ENCODE measurements at regions of chr10 and their contacts with region 1.

Region 1: GRCh38 chr10:7417103-7417623 is 6.3 kb upstream of the SFMBT2 start:
- DNase-seq: no peak
- ATAC-seq: no peak
- H3K4me3 Mint-ChIP-seq: no peak overlapping the region
- H3K27ac Mint-ChIP-seq: no peak overlapping the region
- H3K4me1 Mint-ChIP-seq: peaks cover 6% of the 10 kb centered on the region
- H3K27me3 Mint-ChIP-seq: peaks cover 5% of the 10 kb centered on the region
- CTCF ChIP-seq: no peak

Region 2: DNA sequence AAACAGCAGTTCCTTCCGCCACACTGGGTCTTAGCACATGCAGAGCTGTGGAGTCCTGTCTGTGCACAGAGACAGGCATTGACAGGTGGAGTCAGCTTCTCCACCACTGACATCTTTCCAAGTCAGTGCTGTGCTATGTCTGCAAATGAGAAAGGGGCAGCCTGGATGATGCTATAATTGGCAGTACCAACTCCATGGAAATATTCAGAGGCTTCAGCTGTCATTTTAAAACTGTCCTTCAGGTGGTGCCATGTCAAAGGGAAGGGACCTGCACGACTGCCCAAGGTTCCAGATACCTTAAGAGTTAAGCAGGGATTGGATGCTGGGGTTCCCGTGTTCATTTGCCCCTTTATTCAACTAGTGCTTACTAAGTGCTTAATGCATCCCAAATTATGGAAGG is 579.0 kb before region 1 on chr10:
- CTCF ChIA-PET with region 1: interaction called, 3 read pairs
- POLR2A ChIA-PET with region 1: no interaction called
- intact Hi-C with region 1: loop called (anchors 1 kb)
- DNase-seq: no peak
- ATAC-seq: no peak
- H3K4me3 Mint-ChIP-seq: no peak overlapping the region
- H3K27ac Mint-ChIP-seq: no peak overlapping the region
- H3K4me1 Mint-ChIP-seq: no peaks in the 10 kb centered on the region
- H3K27me3 Mint-ChIP-seq: peaks cover 9% of the 10 kb centered on the region
- CTCF ChIP-seq: no peak

Region 3: GRCh38 chr10:6843481-6843881 is 573.7 kb before region 1 on chr10:
- CTCF ChIA-PET with region 1: interaction called, 3 read pairs
- POLR2A ChIA-PET with region 1: no interaction called
- intact Hi-C with region 1: loop called (anchors 1 kb)
- DNase-seq: no peak
- ATAC-seq: no peak
- H3K4me3 Mint-ChIP-seq: no peak overlapping the region
- H3K27ac Mint-ChIP-seq: no peak overlapping the region
- H3K4me1 Mint-ChIP-seq: no peaks in the 10 kb centered on the region
- H3K27me3 Mint-ChIP-seq: peaks cover 11% of the 10 kb centered on the region
- CTCF ChIP-seq: no peak

Region 4: DNA sequence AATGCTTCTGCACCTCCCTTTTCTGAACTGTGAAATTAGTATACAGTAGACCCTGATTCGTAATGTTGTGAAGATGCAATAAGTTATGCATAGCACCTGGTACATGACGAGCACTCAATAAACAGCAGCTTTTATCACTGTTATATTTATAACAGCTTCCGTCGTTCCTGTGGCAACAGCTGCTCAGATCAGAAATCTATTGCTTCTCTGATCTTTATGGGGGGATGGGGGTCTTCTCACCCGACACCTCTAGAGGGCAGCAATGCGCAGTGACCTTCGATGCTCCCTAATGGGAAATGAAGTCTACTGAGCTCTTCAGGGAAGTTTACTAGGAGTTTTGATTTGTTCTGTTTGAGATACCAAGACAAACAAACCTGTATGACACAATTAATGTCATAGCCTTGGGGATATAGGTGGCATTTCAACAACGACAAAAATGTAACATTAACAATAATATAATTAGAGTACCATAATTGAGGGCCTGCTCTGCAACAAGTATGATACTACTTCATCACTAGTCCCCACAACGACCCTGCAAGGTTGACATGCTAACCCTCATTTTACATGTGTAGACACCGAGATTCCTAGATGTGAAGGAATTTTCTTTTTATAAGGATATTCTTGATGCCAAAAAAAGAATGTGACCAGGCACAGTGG is 295.9 kb before region 1 on chr10:
- CTCF ChIA-PET with region 1: interaction called, 26 read pairs
- POLR2A ChIA-PET with region 1: no interaction called
- intact Hi-C with region 1: loop called (anchors 1 kb)
- DNase-seq: peak; percentile 43
- ATAC-seq: peak; percentile 85
- H3K4me3 Mint-ChIP-seq: no peak overlapping the region
- H3K27ac Mint-ChIP-seq: no peak overlapping the region
- H3K4me1 Mint-ChIP-seq: peaks cover 6% of the 10 kb centered on the region
- H3K27me3 Mint-ChIP-seq: peaks cover 3% of the 10 kb centered on the region
- CTCF ChIP-seq: peak; percentile 42

Region 5: GRCh38 chr10:7374795-7375194 is 42.4 kb before region 1 on chr10:
- CTCF ChIA-PET with region 1: no interaction called
- POLR2A ChIA-PET with region 1: no interaction called
- intact Hi-C with region 1: no loop called
- DNase-seq: no peak
- ATAC-seq: no peak
- H3K4me3 Mint-ChIP-seq: no peak overlapping the region
- H3K27ac Mint-ChIP-seq: no peak overlapping the region
- H3K4me1 Mint-ChIP-seq: peaks cover 23% of the 10 kb centered on the region
- H3K27me3 Mint-ChIP-seq: no peaks in the 10 kb centered on the region
- CTCF ChIP-seq: no peak

Measured in activated B cell treated with CpG ODN at 0.5 μM for 24 hours (primary cell).